SK-N-SH (cell line): ENCODE measurements at regions of chr2 and their contacts with region 1.

Region 1: GRCh38 chr2:3423492-3424175 is 44.1 kb downstream of the TRAPPC12 start:
- DNase-seq: peak; percentile 88
- H3K4me3 ChIP-seq: no peak overlapping the region
- H3K27ac ChIP-seq: no peak overlapping the region
- H3K4me1 ChIP-seq: peaks cover 0 to 15% of the 10 kb centered on the region in 2 experiments; a peak in 1 of 4 replicates
- H3K27me3 ChIP-seq: no peaks in the 10 kb centered on the region
- CTCF ChIP-seq: peak; percentile 100
- EP300 ChIP-seq: no peak
- RAD21 ChIP-seq: peak; percentile 68

Region 2: DNA sequence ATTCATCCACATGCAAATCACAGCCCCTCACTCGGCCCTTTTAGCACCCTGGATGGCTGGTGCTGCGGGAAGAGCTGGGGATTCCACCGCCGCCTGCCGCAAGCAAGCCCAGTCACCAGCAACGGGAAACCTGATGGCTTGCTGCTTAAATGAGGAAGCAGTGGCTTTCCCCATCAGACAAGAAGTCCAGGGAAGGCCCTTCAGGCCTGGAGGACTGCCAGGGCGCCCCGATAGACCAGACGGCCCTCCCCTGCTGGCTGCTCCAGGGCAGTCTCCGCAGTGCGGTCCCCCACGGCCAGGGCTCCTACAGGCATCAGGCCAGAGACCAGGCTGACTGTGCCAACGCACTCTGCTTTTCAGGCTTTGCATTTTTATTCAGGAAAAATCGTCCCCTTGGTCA is 485.2 kb before region 1 on chr2:
- CTCF ChIA-PET with region 1: no interaction called
- POLR2A ChIA-PET with region 1: no interaction called
- DNase-seq: peak; percentile 95
- H3K4me3 ChIP-seq: no peak overlapping the region
- H3K27ac ChIP-seq: peak overlapping the region in 1 of 2 experiments; percentile 95; a peak in 2 of 4 replicates
- H3K4me1 ChIP-seq: peaks cover 0 to 32% of the 10 kb centered on the region in 2 experiments; a peak in 2 of 4 replicates
- H3K27me3 ChIP-seq: no peaks in the 10 kb centered on the region
- CTCF ChIP-seq: no peak
- EP300 ChIP-seq: peak in 1 of 2 experiments; percentile 83; a peak in 2 of 4 replicates
- RAD21 ChIP-seq: peak; percentile 48

Region 3: GRCh38 chr2:3078681-3079080 is 345.0 kb before region 1 on chr2:
- CTCF ChIA-PET with region 1: no interaction called
- POLR2A ChIA-PET with region 1: no interaction called
- DNase-seq: no peak
- H3K4me3 ChIP-seq: no peak overlapping the region
- H3K27ac ChIP-seq: no peak overlapping the region
- H3K4me1 ChIP-seq: peaks cover 0 to 26% of the 10 kb centered on the region in 2 experiments; a peak in 1 of 4 replicates
- H3K27me3 ChIP-seq: no peaks in the 10 kb centered on the region
- CTCF ChIP-seq: no peak
- EP300 ChIP-seq: no peak
- RAD21 ChIP-seq: no peak

Region 4: DNA sequence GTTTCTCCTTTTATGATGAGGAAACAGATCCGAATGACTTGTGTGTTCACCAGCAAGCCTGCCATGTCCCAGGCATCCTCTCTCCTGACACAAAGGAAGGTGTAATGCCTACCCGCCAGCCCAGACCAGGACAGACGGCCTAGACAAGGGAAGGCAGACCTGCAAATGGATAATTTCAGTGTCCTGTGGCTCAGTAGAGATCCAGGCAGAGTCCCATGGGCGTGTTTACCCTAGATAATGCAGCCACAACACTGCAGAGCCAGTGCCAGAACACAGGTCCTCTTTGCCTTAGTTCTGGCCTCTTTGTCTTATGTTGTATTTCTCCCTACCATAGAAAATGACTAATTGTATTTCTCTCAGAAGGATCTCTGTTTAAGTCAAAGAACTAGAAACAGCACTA is 31.4 kb before region 1 on chr2:
- CTCF ChIA-PET with region 1: interaction called, 29 read pairs
- POLR2A ChIA-PET with region 1: no interaction called
- DNase-seq: no peak
- H3K4me3 ChIP-seq: no peak overlapping the region
- H3K27ac ChIP-seq: no peak overlapping the region
- H3K4me1 ChIP-seq: no peaks in the 10 kb centered on the region
- H3K27me3 ChIP-seq: no peaks in the 10 kb centered on the region
- CTCF ChIP-seq: no peak
- EP300 ChIP-seq: no peak
- RAD21 ChIP-seq: no peak

Region 5: DNA sequence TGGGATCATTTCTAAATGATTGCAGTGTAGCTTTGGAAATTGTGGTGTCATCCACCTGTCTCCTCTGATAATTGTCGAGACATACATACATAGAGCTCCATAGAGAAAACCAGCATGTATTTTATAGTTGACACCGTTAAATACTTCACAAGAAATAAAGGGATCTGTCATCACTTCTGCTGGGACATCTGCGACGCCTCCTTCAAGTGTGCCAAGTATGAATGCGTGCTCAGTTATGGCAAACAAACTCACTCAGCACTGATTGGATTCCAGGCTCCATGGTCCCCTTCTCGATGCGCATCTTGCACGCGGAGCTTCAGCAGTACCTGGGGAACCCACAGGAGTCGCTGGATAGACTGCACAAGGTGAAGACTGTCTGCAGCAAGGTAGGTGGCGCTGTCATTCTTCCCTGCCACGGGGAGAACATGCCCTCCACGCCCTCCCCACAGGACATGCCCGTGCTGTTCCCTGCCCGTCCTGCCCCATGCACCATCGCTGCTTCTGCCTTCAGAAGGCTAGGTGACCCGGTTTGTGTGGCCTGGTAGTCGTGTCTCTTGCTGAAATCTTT is 20.0 kb after region 1 on chr2:
- CTCF ChIA-PET with region 1: interaction called, 49 read pairs
- POLR2A ChIA-PET with region 1: no interaction called
- DNase-seq: no peak
- H3K4me3 ChIP-seq: no peak overlapping the region
- H3K27ac ChIP-seq: no peak overlapping the region; a peak in 1 of 4 replicates
- H3K4me1 ChIP-seq: peaks cover 0 to 15% of the 10 kb centered on the region in 2 experiments; a peak in 2 of 4 replicates
- H3K27me3 ChIP-seq: no peaks in the 10 kb centered on the region
- CTCF ChIP-seq: peak; percentile 7; the same call in 1 of the 2 replicates
- EP300 ChIP-seq: no peak
- RAD21 ChIP-seq: no peak

Region 6: DNA sequence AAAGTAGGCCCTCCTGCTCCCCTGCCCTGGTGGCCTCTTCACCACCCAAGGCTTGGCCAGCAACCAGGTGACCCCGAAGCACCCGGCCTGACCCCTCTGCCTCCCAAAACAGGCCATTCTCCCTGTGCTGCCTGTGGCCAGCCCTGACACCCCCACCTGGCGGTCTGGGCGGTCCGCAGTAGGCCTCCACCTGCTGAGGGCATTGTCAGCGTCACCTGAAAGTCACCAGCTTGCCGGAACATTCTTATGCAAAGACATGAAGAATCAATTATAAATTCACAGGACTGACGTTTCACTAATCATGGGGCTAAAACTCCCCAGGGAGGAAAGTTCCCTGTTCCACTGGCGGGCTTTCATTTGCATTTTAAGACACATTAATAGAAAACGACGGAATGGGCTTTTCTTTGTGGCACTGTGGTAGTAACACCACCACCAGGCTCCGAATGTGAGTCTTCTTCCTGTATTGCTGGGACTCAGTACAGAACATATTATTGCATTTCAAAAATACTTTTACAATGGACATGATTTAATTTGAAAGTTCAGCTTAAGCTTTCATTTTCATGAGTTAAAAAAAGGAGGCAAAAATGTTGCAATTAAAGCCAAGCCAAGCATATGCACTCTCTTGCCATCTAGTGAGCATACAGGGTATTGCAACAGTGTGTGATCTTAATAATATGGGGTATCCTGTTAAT is 38.3 kb after region 1 on chr2:
- CTCF ChIA-PET with region 1: interaction called, 132 read pairs
- POLR2A ChIA-PET with region 1: no interaction called
- DNase-seq: peak; percentile 89
- H3K4me3 ChIP-seq: no peak overlapping the region; a peak in 1 of 4 replicates
- H3K27ac ChIP-seq: peak overlapping the region in 1 of 2 experiments; percentile 43; a peak in 2 of 4 replicates
- H3K4me1 ChIP-seq: peaks cover 16 to 22% of the 10 kb centered on the region in 2 experiments; a peak in 3 of 4 replicates
- H3K27me3 ChIP-seq: no peaks in the 10 kb centered on the region
- CTCF ChIP-seq: peak; percentile 98
- EP300 ChIP-seq: no peak
- RAD21 ChIP-seq: peak; percentile 89